Gastrocnemius medialis (tissue), 4 donors: ENCODE measurements at regions of chr19 and their contacts with region 1.

Region 1: GRCh38 chr19:1438035-1438932 is at the start of gene RPS15:
- DNase-seq: peak; percentile 88 to 92
- ATAC-seq: peak; percentile 90 to 94
- H3K4me3 ChIP-seq: peak within 1 kb of the TSS; percentile 81 to 98 (median 88)
- H3K27ac ChIP-seq: peak within 1 kb of the TSS; percentile 86 to 92 (median 88)
- H3K4me1 ChIP-seq: peaks cover 14 to 29% of the 10 kb centered on the region in 2 donors
- H3K27me3 ChIP-seq: no peaks in the 10 kb centered on the region
- CTCF ChIP-seq: peak; percentile 89 to 97 (median 95)
- POLR2A ChIP-seq: peak; percentile 92 to 96
- total RNA-seq, gene RPS15: 2,323 to 3,835 (median 2,607) TPM

Region 2: DNA sequence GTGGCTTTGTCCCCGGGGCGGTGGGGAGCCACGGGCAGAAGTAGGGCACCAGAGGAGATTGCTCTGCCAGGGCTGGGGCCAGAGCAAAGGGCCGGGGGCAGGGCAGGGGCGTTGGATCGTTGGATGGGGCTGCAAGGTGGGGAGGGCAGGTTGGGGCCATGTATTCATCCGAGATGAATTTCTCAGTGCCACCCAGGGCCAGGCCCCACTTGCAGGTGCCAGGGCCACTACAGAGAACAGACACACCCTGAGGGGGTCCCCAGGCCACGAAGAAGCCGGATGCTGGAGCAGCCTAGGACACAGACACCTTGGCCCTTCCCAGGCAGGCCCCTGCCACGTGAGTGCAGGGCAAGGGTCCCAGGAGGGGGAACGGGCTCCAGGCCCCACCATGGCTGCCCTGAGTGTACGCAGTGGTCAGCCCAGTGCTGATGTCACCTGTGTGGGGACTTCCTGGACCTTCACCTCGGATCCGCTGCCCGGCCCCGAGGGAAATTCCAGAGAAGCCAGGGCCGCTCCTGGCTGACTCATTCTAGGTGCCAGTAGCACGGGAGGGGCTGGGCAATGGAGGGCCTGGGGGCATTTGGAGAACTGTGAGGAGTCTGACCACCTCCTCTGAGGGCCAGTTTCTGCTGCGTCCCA is 254.6 kb before region 1 on chr19:
- in situ Hi-C with region 1: no loop called
- intact Hi-C with region 1: no loop called
- DNase-seq: no peak
- ATAC-seq: no peak
- H3K4me3 ChIP-seq: no peak overlapping the region
- H3K27ac ChIP-seq: no peak overlapping the region
- H3K4me1 ChIP-seq: no peaks in the 10 kb centered on the region
- H3K27me3 ChIP-seq: peaks cover 0 to 2% (median 0%) of the 10 kb centered on the region in 3 donors
- CTCF ChIP-seq: no peak
- POLR2A ChIP-seq: no peak

Region 3: DNA sequence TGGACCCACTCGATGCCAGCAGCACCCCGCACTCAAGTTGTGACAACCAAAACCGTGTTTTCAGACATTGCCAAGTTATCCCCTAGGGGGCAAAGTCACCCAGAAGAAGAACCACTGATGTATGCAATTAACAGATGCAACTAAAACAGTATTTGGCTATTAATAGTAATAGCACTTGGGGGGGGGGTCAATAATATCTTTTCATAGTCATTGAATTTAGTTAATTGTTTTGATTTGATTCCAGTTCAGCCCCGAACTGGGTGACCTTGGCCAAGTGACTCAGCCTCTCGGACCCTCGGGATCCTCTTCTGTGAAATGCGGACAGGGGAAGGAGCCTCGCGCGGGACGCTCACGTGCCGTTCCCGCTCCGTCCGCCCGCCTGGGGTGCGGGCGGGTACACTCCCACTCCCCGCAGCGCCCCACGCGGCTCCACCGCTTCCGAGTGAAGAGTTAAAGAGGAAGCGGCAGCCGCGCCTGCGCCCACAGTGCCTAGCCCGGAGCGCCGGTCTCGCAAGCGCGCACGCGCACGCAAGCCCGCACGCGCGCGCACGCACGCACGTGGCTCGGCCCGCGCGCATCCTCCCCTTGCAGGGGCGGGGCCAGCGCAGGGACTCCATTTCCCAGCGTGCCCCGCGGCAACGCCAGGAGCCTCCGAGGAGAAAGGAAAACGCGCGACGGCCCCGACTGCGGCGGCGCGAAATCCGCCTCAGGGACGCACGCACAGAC is 31.3 kb before region 1 on chr19:
- in situ Hi-C with region 1: no loop called
- intact Hi-C with region 1: loop called (anchors 1 kb)
- DNase-seq: peak; percentile 97 to 99
- ATAC-seq: peak; percentile 76 to 84
- H3K4me3 ChIP-seq: peak overlapping the region; percentile 59 to 75 (median 70)
- H3K27ac ChIP-seq: peak overlapping the region; percentile 90 to 95 (median 92)
- H3K4me1 ChIP-seq: peaks cover 32 to 33% of the 10 kb centered on the region in 2 donors
- H3K27me3 ChIP-seq: no peaks in the 10 kb centered on the region
- CTCF ChIP-seq: peak in 4 of 5 experiments; percentile 24 to 46 (median 34)
- POLR2A ChIP-seq: peak in 1 of 2 donors; percentile 24

Region 4: GRCh38 chr19:1417681-1418495 is 20.4 kb before region 1 on chr19:
- in situ Hi-C with region 1: no loop called
- intact Hi-C with region 1: loop called (anchors 2 kb)
- DNase-seq: peak in 1 of 2 donors; percentile 50
- ATAC-seq: peak in 1 of 2 donors; percentile 12
- H3K4me3 ChIP-seq: no peak overlapping the region
- H3K27ac ChIP-seq: peak overlapping the region; percentile 93 to 98 (median 94)
- H3K4me1 ChIP-seq: peaks cover 62 to 71% of the 10 kb centered on the region in 2 donors
- H3K27me3 ChIP-seq: no peaks in the 10 kb centered on the region
- CTCF ChIP-seq: no peak
- POLR2A ChIP-seq: no peak

Region 5: GRCh38 chr19:1470203-1471009 is 32.1 kb after region 1 on chr19:
- in situ Hi-C with region 1: no loop called
- intact Hi-C with region 1: no loop called
- DNase-seq: no peak
- ATAC-seq: no peak
- H3K4me3 ChIP-seq: peak overlapping the region; percentile 26 to 52 (median 42)
- H3K27ac ChIP-seq: no peak overlapping the region
- H3K4me1 ChIP-seq: peaks cover 11 to 49% of the 10 kb centered on the region in 2 donors
- H3K27me3 ChIP-seq: peaks cover 72 to 78% (median 72%) of the 10 kb centered on the region in 3 donors
- CTCF ChIP-seq: no peak
- POLR2A ChIP-seq: no peak

Region 6: DNA sequence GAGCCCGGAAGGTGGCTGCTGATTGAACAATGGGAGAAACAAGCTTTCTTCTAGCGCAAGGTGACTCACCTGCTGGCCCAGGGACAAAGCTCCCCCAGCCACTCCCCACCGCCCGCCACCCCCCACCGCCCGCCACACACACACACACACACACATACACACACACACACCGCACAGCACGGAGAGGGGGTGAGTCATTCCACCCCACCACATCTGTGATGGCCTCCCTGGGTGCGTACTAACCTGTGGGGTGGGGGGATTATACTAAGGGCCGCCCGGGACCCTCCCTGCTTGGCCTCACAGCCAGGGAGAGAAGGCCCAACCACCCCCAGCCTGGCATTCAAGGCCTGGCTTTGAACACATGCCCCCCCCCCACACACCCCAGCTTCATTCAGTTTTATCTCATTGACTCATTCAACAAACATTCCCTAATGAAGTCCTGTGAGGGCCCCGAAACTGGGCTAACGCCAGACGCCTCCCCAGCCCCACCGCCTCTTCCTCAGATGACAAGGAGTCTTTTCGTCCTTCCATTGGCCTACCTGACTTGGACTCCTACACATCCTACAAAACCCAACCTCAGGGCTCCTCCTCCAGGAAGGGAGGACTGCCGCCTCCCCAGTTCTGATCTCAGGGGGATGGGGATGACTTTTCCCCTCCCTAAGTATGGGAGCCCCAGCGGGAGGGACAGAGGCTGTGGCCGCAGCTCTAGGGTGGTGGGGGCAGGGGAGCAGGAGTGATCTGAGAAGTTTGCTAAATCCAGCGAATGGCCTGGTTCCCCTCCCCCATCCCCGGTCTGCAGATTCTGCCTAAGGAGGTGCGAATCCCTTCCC is 309.2 kb after region 1 on chr19:
- in situ Hi-C with region 1: no loop called
- intact Hi-C with region 1: no loop called
- DNase-seq: no peak
- ATAC-seq: no peak
- H3K4me3 ChIP-seq: no peak overlapping the region
- H3K27ac ChIP-seq: no peak overlapping the region
- H3K4me1 ChIP-seq: peaks cover 4 to 8% of the 10 kb centered on the region in 2 donors
- H3K27me3 ChIP-seq: peaks cover 82 to 90% (median 87%) of the 10 kb centered on the region in 3 donors
- CTCF ChIP-seq: no peak
- POLR2A ChIP-seq: no peak